ENCODE measurements at regions of chr20 and their contacts with region 1.

Region 1: DNA sequence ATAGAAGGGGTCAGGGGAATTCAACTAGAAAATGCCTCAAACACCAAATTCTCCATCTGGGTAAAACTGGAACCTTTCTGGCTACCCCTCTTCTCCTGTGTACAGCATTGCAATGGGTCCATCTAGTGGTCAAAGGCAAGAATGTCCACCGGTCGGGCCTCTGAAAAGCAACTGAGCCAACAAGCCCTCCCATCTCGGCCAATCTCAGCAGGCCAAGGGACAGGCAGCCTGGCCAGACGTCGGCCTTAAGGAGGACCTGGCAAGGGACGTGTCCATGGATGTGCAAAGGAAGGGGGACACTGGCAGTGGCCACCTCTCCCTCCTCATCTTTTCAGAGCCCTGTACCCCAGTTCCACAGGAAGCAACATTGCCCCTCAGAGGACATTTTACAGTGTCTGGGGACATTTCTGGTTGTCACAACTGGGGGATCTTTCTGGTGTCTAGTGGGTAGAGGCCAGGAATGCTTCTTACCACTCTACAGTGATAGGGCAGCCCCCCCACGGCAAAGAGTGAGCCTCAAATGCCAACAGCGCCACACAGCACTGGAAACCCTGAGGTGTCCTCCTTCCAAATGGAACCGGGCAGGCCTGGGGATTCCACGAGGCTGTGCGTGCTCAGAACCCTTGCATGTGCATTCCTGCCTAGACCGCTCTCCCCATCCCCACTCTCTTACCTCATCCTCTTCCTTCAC is 99.8 kb upstream of the FOXA2 start:
- DNase-seq: peak; percentile 57 to 69 (median 66)
- ATAC-seq: peak; percentile 95
- H3K4me3 ChIP-seq: no peak overlapping the region
- H3K27ac ChIP-seq: no peak overlapping the region; the same call in 2 of the 3 replicates
- H3K4me1 ChIP-seq: peaks cover 0 to 7% of the 10 kb centered on the region in 2 experiments; a peak in 1 of 5 replicates
- H3K27me3 ChIP-seq: no peaks in the 10 kb centered on the region; a peak in 2 of 5 replicates
- CTCF ChIP-seq: peak; percentile 78 to 89 (median 80)
- EP300 ChIP-seq: no peak
- POLR2A ChIP-seq: no peak
- RAD21 ChIP-seq: peak; percentile 86 to 91

Region 2: GRCh38 chr20:22339091-22339881 is 344.9 kb before region 1 on chr20:
- CTCF ChIA-PET with region 1: interaction called, 38 read pairs
- POLR2A ChIA-PET with region 1: interaction called, 3 read pairs
- in situ Hi-C with region 1: loop called (anchors 5 kb)
- intact Hi-C with region 1: loop called (anchors 1 kb)
- DNase-seq: peak; percentile 29 to 77 (median 31)
- ATAC-seq: peak; percentile 87
- H3K4me3 ChIP-seq: no peak overlapping the region
- H3K27ac ChIP-seq: no peak overlapping the region
- H3K4me1 ChIP-seq: no peaks in the 10 kb centered on the region
- H3K27me3 ChIP-seq: no peaks in the 10 kb centered on the region
- CTCF ChIP-seq: peak; percentile 64 to 82 (median 71)
- EP300 ChIP-seq: no peak
- POLR2A ChIP-seq: no peak
- RAD21 ChIP-seq: peak; percentile 93 to 96

Region 3: DNA sequence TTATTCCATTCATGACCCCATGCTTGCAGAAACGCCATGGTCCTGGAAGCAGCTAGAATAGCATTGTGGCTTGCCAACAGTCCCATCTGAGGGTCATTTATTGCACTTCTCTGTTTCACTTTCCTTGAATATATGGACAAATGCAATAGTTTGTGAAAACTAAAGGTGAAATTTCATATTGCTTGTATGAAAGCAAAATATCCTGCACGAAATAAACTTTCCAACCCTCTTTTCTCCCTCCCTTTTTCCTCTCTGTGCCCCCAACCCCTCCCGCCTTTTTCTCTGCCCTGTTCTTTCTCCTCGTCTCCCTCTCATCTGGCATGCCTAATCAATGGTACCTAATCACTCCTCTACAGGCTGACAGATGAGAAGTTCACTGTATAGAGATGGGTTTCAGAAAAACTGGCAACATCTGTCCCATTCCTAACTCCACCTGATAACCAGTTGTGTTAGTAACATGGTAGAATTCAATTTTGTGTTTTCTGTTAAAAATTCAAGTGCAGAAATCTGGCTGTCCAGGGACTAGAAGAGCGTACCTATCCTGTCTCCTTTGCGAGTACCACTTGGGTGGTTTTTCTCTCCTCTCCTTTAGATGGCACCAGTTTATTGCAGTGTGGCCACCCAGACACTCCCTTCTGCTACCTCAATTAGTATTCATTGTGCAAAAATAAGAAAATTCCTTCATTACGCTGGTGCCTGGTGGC is 298.5 kb before region 1 on chr20:
- CTCF ChIA-PET with region 1: interaction called, 3 read pairs
- POLR2A ChIA-PET with region 1: no interaction called
- in situ Hi-C with region 1: no loop called
- intact Hi-C with region 1: loop called (anchors 1 kb)
- DNase-seq: peak; percentile 10 to 55 (median 30)
- ATAC-seq: peak; percentile 94
- H3K4me3 ChIP-seq: no peak overlapping the region
- H3K27ac ChIP-seq: no peak overlapping the region
- H3K4me1 ChIP-seq: peaks cover 0 to 22% of the 10 kb centered on the region in 2 experiments; a peak in 2 of 5 replicates
- H3K27me3 ChIP-seq: no peaks in the 10 kb centered on the region
- CTCF ChIP-seq: peak; percentile 47 to 72 (median 54)
- EP300 ChIP-seq: no peak
- POLR2A ChIP-seq: no peak
- RAD21 ChIP-seq: peak; percentile 82 to 84

Region 4: GRCh38 chr20:22490287-22491193 is 193.7 kb before region 1 on chr20:
- CTCF ChIA-PET with region 1: no interaction called
- POLR2A ChIA-PET with region 1: no interaction called
- in situ Hi-C with region 1: no loop called
- intact Hi-C with region 1: loop called (anchors 10 kb)
- DNase-seq: no peak
- ATAC-seq: no peak; the same call in 2 of the 3 replicates
- H3K4me3 ChIP-seq: no peak overlapping the region
- H3K27ac ChIP-seq: no peak overlapping the region
- H3K4me1 ChIP-seq: peaks cover 0 to 3% of the 10 kb centered on the region in 2 experiments; a peak in 2 of 5 replicates
- H3K27me3 ChIP-seq: no peaks in the 10 kb centered on the region
- CTCF ChIP-seq: peak in 1 of 3 experiments; percentile 25; a peak in 1 of 6 replicates
- EP300 ChIP-seq: no peak
- POLR2A ChIP-seq: no peak
- RAD21 ChIP-seq: no peak; a peak in 1 of 4 replicates

Region 5: DNA sequence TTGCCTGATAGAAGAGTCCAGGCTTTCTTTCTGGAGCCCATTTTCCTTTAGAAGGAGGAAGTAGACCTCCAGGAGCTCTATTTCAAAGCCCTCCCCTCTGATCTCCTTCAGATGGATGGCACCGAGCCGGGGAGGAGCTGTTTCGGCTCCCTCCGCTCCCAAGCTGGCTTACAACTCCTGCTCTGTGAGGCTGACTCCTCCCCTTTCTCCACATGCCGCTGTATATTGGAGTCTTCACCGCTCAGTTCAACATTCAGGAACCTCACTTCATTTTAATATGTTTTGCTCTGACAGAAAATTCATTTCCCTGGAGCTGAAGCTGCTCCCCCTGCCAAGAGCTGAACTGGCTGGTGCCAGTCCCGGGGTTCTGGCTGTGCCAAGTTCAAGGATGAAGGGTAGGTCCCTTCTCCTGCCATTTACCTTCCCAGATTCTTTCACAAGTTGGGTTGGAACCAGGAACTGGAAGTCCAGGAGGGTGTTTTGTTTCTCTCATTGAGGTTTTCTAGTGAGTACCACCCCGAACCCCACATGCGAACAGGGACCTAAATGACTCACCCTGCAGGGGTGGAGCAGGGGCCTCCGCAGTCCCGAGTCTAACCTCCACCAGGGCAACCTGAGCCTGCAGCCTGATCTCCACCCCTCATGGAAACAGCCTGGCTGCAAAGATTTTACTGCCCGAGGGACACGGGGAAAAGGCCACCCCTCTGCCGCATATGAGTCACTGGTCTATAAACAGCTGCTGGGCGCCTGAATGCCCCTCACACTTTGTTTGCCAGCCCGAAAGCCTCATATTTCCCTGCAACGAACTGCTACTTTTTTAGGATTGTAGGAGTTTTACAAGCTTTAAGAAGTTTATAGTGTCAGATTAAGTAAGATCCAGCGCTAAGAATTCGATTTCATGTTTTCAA is 31.3 kb before region 1 on chr20:
- CTCF ChIA-PET with region 1: no interaction called
- POLR2A ChIA-PET with region 1: no interaction called
- in situ Hi-C with region 1: no loop called
- intact Hi-C with region 1: no loop called
- DNase-seq: peak in 1 of 4 experiments; percentile 7
- ATAC-seq: no peak
- H3K4me3 ChIP-seq: no peak overlapping the region
- H3K27ac ChIP-seq: no peak overlapping the region
- H3K4me1 ChIP-seq: no peaks in the 10 kb centered on the region; a peak in 1 of 5 replicates
- H3K27me3 ChIP-seq: peaks cover 0 to 33% of the 10 kb centered on the region in 2 experiments; a peak in 4 of 5 replicates
- CTCF ChIP-seq: no peak
- EP300 ChIP-seq: no peak
- POLR2A ChIP-seq: no peak
- RAD21 ChIP-seq: no peak

Region 6: GRCh38 chr20:22711987-22712755 is 28.0 kb after region 1 on chr20:
- CTCF ChIA-PET with region 1: no interaction called
- POLR2A ChIA-PET with region 1: no interaction called
- in situ Hi-C with region 1: no loop called
- intact Hi-C with region 1: no loop called
- DNase-seq: no peak
- ATAC-seq: no peak
- H3K4me3 ChIP-seq: no peak overlapping the region
- H3K27ac ChIP-seq: no peak overlapping the region
- H3K4me1 ChIP-seq: no peaks in the 10 kb centered on the region
- H3K27me3 ChIP-seq: no peaks in the 10 kb centered on the region
- CTCF ChIP-seq: no peak
- EP300 ChIP-seq: no peak
- POLR2A ChIP-seq: no peak
- RAD21 ChIP-seq: no peak

Measured in K562 (cell line).